Tibial artery (tissue), 4 donors: ENCODE measurements at regions of chr9 and their contacts with region 1.

Region 1: GRCh38 chr9:124771021-124771866 is at the start of gene NR6A1:
- DNase-seq: peak; percentile 95 to 97
- H3K4me3 ChIP-seq: peak within 1 kb of the TSS; percentile 90 to 92
- H3K27ac ChIP-seq: peak within 1 kb of the TSS; percentile 23 to 42
- H3K4me1 ChIP-seq: peaks cover 0 to 30% (median 21%) of the 10 kb centered on the region in 4 donors
- H3K27me3 ChIP-seq: peaks cover 0 to 56% of the 10 kb centered on the region in 2 donors
- CTCF ChIP-seq: peak in 1 of 2 experiments; percentile 20

Region 2: GRCh38 chr9:124415102-124415851 is 356.0 kb before region 1 on chr9 and contains the start of gene PSMB7:
- intact Hi-C with region 1: loop called (anchors 5 kb)
- DNase-seq: peak; percentile 96 to 97
- H3K4me3 ChIP-seq: peak within 1 kb of the TSS; percentile 92 to 95
- H3K27ac ChIP-seq: peak within 1 kb of the TSS; percentile 63 to 70
- H3K4me1 ChIP-seq: peaks cover 0 to 16% (median 12%) of the 10 kb centered on the region in 4 donors
- H3K27me3 ChIP-seq: no peaks in the 10 kb centered on the region
- CTCF ChIP-seq: peak; percentile 76 to 81

Region 3: GRCh38 chr9:124695280-124695890 is 75.9 kb before region 1 on chr9:
- intact Hi-C with region 1: no loop called
- DNase-seq: no peak
- H3K4me3 ChIP-seq: no peak overlapping the region
- H3K27ac ChIP-seq: no peak overlapping the region
- H3K4me1 ChIP-seq: no peaks in the 10 kb centered on the region
- H3K27me3 ChIP-seq: no peaks in the 10 kb centered on the region
- CTCF ChIP-seq: no peak

Region 4: GRCh38 chr9:124852829-124853531 is 81.7 kb after region 1 on chr9 and contains the start of gene WDR38:
- intact Hi-C with region 1: loop called (anchors 2 kb)
- DNase-seq: peak; percentile 51 to 83
- H3K4me3 ChIP-seq: peak within 1 kb of the TSS; percentile 41 to 51
- H3K27ac ChIP-seq: peak within 1 kb of the TSS; percentile 38 to 66
- H3K4me1 ChIP-seq: peaks cover 0 to 20% (median 15%) of the 10 kb centered on the region in 4 donors
- H3K27me3 ChIP-seq: no peaks in the 10 kb centered on the region
- CTCF ChIP-seq: peak; percentile 94 to 98

Region 5: GRCh38 chr9:125008599-125008998 is 237.4 kb after region 1 on chr9:
- intact Hi-C with region 1: no loop called
- DNase-seq: no peak
- H3K4me3 ChIP-seq: no peak overlapping the region
- H3K27ac ChIP-seq: no peak overlapping the region
- H3K4me1 ChIP-seq: no peaks in the 10 kb centered on the region
- H3K27me3 ChIP-seq: no peaks in the 10 kb centered on the region
- CTCF ChIP-seq: no peak

Region 6: GRCh38 chr9:125110464-125110863 is 339.2 kb after region 1 on chr9:
- intact Hi-C with region 1: no loop called
- DNase-seq: no peak
- H3K4me3 ChIP-seq: no peak overlapping the region
- H3K27ac ChIP-seq: no peak overlapping the region
- H3K4me1 ChIP-seq: no peaks in the 10 kb centered on the region
- H3K27me3 ChIP-seq: no peaks in the 10 kb centered on the region
- CTCF ChIP-seq: no peak

Region 7: GRCh38 chr9:125374443-125375309 is 603.4 kb after region 1 on chr9:
- intact Hi-C with region 1: loop called (anchors 5 kb)
- DNase-seq: peak in 1 of 2 donors; percentile 37
- H3K4me3 ChIP-seq: peak overlapping the region; percentile 18 to 36
- H3K27ac ChIP-seq: no peak overlapping the region
- H3K4me1 ChIP-seq: peaks cover 0 to 9% (median 4%) of the 10 kb centered on the region in 4 donors
- H3K27me3 ChIP-seq: peaks cover 0 to 27% of the 10 kb centered on the region in 2 donors
- CTCF ChIP-seq: peak; percentile 77 to 85